Dendritic cell treated with granulocyte-macrophage colony-stimulating factor and Interleukin-4, amounts not matched to agents 40 ng/mL and 50 ng/mL, for 4 days (primary cell): ENCODE measurements at regions of chr6 and their contacts with region 1.

Region 1: DNA sequence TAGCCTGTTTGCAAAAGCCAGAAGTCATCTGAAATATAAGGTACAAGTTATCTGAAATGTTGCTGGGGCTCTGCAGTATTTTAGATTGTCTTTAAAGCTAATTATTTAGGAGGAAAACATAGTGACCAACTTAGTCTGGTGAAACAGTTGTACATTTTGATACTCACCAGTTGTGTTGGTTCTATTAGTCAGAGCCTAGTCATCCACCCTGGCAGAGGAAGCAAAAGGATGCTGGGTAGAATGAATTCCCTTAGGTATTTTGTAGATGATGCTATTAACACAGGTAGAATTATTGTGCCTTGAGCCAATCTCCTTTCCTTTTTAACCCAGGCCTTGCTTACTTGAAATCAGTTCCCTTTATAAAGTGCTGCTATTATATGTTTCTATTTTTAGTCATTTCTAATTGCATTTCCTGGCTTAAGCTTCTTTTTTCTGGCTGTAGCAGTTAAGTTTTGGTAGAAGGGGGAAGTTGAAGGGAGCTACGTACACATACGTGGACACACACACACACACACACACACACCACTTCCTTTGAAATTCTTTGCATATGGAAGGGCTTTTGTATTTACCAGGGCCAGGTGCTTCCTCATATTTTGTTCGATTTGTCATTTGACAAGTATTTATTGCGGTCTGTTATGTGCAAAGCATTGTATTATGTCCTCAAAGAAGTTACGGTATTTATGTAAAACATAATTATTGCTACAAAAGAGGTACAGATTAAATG is 82.4 kb downstream of the RTN4IP1 start:
- H3K4me3 Mint-ChIP-seq: peak overlapping the region; percentile 35
- H3K27ac Mint-ChIP-seq: peak overlapping the region; percentile 95
- H3K4me1 Mint-ChIP-seq: peaks cover 69% of the 10 kb centered on the region
- H3K27me3 Mint-ChIP-seq: no peaks in the 10 kb centered on the region

Region 2: GRCh38 chr6:106501960-106502371 is 44.9 kb before region 1 on chr6:
- intact Hi-C with region 1: no loop called
- H3K4me3 Mint-ChIP-seq: no peak overlapping the region
- H3K27ac Mint-ChIP-seq: peak overlapping the region; percentile 78
- H3K4me1 Mint-ChIP-seq: peaks cover 48% of the 10 kb centered on the region
- H3K27me3 Mint-ChIP-seq: no peaks in the 10 kb centered on the region

Region 3: DNA sequence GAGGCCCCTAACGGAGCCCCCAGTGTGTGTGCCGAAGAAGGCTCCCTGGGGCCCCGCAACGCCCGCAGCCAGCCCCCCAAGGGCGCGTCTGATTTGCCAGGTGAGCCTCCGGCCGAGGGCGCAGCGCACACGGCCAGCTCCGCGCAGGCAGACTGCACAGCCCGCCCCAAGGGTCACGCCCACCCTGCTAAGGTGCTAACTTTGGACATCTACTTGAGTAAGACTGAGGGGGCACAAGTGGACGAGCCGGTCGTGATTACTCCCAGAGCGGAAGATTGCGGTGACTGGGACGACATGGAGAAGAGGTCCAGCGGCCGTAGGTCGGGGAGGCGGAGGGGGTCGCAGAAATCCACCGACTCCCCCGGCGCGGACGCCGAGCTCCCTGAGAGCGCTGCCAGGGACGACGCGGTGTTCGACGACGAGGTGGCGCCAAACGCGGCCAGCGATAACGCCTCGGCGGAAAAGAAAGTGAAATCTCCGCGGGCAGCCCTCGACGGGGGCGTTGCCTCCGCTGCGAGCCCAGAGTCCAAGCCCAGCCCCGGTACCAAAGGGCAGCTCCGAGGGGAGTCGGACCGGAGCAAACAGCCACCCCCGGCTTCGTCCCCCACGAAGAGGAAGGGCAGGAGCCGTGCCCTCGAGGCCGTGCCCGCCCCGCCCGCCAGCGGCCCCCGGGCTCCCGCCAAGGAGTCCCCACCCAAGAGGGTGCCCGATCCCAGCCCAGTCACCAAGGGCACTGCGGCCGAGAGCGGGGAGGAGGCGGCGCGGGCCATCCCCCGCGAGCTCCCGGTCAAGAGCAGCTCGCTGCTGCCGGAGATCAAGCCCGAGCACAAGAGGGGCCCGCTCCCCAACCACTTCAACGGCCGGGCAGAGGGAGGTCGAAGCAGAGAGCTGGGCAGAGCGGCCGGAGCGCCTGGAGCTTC is 34.5 kb before region 1 on chr6:
- intact Hi-C with region 1: loop called (anchors 2 kb)
- H3K4me3 Mint-ChIP-seq: peak overlapping the region; percentile 86
- H3K27ac Mint-ChIP-seq: peak overlapping the region; percentile 96
- H3K4me1 Mint-ChIP-seq: peaks cover 60% of the 10 kb centered on the region
- H3K27me3 Mint-ChIP-seq: no peaks in the 10 kb centered on the region

Region 4: GRCh38 chr6:106520711-106521401 is 26.0 kb before region 1 on chr6:
- intact Hi-C with region 1: loop called (anchors 1 kb)
- H3K4me3 Mint-ChIP-seq: peak overlapping the region; percentile 81
- H3K27ac Mint-ChIP-seq: peak overlapping the region; percentile 97
- H3K4me1 Mint-ChIP-seq: peaks cover 77% of the 10 kb centered on the region
- H3K27me3 Mint-ChIP-seq: no peaks in the 10 kb centered on the region